ENCODE measurements at regions of chr4 and their contacts with region 1.

Region 1: DNA sequence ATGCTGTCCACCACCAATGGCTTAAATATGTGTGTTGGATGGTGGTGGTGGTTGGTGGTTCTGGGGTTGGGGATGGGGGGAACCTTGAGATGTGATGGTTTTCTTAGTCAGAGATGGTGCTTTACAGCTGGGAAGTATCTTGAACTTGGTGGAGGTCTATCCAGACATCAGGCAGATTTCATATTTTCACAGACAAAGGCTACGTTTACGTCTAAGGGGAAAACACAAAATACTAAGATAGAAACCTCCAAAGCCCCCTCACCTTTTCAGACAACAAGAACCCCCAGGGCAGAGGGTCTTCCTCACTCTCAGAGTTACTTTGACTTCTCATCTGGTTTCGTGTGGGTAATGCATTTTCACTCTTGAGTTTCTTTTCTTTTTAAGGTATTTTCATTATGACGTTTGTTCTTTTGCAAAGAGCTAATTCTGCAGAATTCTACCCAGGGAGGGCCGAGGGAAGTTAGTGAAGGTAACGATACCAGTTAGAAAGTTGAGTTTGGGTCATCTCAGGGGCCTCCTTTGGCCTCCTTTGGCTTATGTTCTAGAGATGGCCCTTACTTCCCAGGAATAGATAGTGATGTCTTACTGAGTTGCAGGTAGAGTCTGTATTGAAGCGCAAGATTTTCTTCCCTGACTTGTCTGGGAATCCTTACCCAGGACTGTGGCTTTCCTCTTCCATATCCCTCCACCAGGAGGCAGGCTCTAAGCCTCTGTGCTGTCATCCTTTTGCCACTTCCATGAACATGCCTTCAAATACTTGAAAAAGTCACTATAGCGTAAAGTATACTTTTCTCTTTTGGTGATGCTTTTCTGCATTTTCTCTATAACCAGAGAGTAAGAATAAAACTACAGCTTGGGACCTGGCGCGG is 31.9 kb downstream of the RHOH start:
- DNase-seq: peak in 1 of 2 experiments; percentile 61
- H3K4me3 ChIP-seq: no peak overlapping the region
- H3K27ac ChIP-seq: no peak overlapping the region
- H3K4me1 ChIP-seq: peaks cover 2 to 3% (median 2%) of the 10 kb centered on the region in 4 experiments; a peak in 3 of 7 replicates
- H3K27me3 ChIP-seq: no peaks in the 10 kb centered on the region
- CTCF ChIP-seq: peak; percentile 48 to 73 (median 73)
- EP300 ChIP-seq: no peak
- POLR2A ChIP-seq: no peak
- RAD21 ChIP-seq: peak; percentile 50 to 74

Region 2: GRCh38 chr4:39855909-39856512 is 372.7 kb before region 1 on chr4:
- CTCF ChIA-PET with region 1: no interaction called
- POLR2A ChIA-PET with region 1: no interaction called
- DNase-seq: no peak
- H3K4me3 ChIP-seq: no peak overlapping the region
- H3K27ac ChIP-seq: no peak overlapping the region
- H3K4me1 ChIP-seq: no peaks in the 10 kb centered on the region
- H3K27me3 ChIP-seq: no peaks in the 10 kb centered on the region
- CTCF ChIP-seq: no peak
- EP300 ChIP-seq: no peak
- POLR2A ChIP-seq: no peak
- RAD21 ChIP-seq: no peak

Region 3: GRCh38 chr4:40149960-40150385 is 78.8 kb before region 1 on chr4:
- CTCF ChIA-PET with region 1: no interaction called
- POLR2A ChIA-PET with region 1: no interaction called
- DNase-seq: peak in 1 of 2 experiments; percentile 69
- H3K4me3 ChIP-seq: no peak overlapping the region
- H3K27ac ChIP-seq: no peak overlapping the region
- H3K4me1 ChIP-seq: no peaks in the 10 kb centered on the region
- H3K27me3 ChIP-seq: no peaks in the 10 kb centered on the region
- CTCF ChIP-seq: peak; percentile 33 to 85 (median 75)
- EP300 ChIP-seq: no peak
- POLR2A ChIP-seq: no peak
- RAD21 ChIP-seq: peak; percentile 83 to 86

Region 4: GRCh38 chr4:40238700-40239548 is 10.2 kb after region 1 on chr4:
- CTCF ChIA-PET with region 1: interaction called, 12 read pairs
- POLR2A ChIA-PET with region 1: interaction called, 3 read pairs
- DNase-seq: no peak
- H3K4me3 ChIP-seq: no peak overlapping the region
- H3K27ac ChIP-seq: 0 out of 2 replicates have a peak overlapping the region, but pooled peaks have one; percentile 15
- H3K4me1 ChIP-seq: no peaks in the 10 kb centered on the region
- H3K27me3 ChIP-seq: no peaks in the 10 kb centered on the region
- CTCF ChIP-seq: no peak
- EP300 ChIP-seq: no peak
- POLR2A ChIP-seq: no peak
- RAD21 ChIP-seq: no peak

Region 5: GRCh38 chr4:40246011-40246900 is 17.5 kb after region 1 on chr4:
- CTCF ChIA-PET with region 1: interaction called, 12 read pairs
- POLR2A ChIA-PET with region 1: interaction called, 3 read pairs
- DNase-seq: peak in 1 of 2 experiments; percentile 55
- H3K4me3 ChIP-seq: no peak overlapping the region
- H3K27ac ChIP-seq: no peak overlapping the region
- H3K4me1 ChIP-seq: no peaks in the 10 kb centered on the region; a peak in 2 of 7 replicates
- H3K27me3 ChIP-seq: no peaks in the 10 kb centered on the region
- CTCF ChIP-seq: peak; percentile 44 to 57 (median 48)
- EP300 ChIP-seq: no peak
- POLR2A ChIP-seq: no peak
- RAD21 ChIP-seq: peak; percentile 49 to 65

Region 6: DNA sequence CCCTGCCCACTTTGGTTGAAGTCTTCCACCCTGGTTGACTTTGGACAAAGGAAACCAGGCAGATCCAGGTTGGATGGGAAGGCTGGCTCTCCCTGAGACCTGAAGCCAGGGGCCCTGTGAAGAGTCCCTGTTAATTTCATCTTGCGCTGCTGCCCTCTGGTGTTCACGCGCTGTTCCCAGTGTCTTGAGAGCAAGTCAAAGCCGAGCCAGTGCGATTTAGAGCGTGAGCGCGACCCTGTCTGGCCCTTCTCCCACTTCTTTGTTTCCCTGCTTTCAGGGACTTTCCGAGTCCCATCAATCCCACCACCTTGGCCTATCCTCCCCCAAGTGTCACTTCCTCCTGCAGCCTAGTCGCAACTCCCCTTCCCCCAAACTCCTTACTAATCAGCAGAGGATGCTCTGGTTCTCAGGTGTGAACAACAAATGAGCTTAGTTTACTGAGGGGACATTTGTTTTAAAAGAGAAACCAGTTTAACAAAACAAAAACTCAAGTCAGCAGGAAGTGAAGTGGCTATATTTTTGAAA is 80.6 kb after region 1 on chr4:
- CTCF ChIA-PET with region 1: interaction called, 20 read pairs
- POLR2A ChIA-PET with region 1: no interaction called
- DNase-seq: peak; percentile 92 to 95
- H3K4me3 ChIP-seq: peak overlapping the region in 1 of 4 experiments; percentile 16; a peak in 1 of 8 replicates
- H3K27ac ChIP-seq: peak overlapping the region; percentile 2; the same call in 1 of the 2 replicates
- H3K4me1 ChIP-seq: peaks cover 6 to 25% (median 16%) of the 10 kb centered on the region in 4 experiments; a peak in 6 of 7 replicates
- H3K27me3 ChIP-seq: peaks cover 0 to 1% (median 0%) of the 10 kb centered on the region in 4 experiments; a peak in 1 of 7 replicates
- CTCF ChIP-seq: peak; percentile 85 to 96 (median 87)
- EP300 ChIP-seq: peak in 1 of 2 experiments; percentile 81; a peak in 1 of 3 replicates
- POLR2A ChIP-seq: peak in 1 of 2 experiments; percentile 39; a peak in 1 of 3 replicates
- RAD21 ChIP-seq: peak; percentile 86 to 88

Region 7: DNA sequence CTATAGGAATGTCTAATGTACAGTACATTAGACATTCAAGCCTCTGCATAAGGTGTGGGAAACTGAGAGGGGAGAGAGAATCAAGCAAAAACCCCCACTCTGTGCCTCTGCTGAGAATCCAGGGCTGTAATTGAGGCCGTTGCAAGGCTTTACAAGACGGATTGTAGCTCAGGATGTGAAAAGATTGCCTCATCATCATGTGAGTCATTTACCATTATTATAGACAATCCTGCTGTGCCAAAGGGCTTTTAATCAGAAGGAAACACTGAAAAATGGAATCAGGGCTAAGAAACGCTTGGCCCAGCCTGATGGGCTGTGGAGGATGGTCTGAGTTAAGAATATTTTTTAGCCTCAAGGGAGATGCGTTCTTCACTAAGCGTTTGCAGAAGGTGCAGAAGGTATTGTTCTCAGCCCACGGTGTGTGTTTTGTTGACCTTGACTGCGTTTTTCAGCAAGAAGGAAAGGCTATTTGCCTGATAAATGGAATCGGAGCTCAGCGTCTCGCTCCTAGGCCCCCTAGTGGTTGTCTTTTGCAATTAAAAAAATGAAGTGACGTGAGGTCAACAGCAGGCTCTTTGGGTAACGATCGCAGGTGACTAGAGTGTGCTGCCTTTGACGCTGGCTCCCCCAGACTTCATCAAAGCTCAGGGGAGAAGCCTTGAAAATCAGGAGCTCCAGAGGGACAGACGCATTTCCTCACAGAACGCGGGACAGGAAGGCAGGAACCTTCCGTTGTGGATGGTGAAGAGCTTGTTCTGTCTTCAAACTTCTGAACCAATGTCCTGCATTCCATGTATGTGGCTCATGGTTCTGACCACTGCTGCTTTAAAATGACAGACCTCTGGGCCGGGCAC is 88.3 kb after region 1 on chr4:
- CTCF ChIA-PET with region 1: interaction called, 10 read pairs
- POLR2A ChIA-PET with region 1: no interaction called
- DNase-seq: peak; percentile 43 to 72
- H3K4me3 ChIP-seq: peak overlapping the region in 1 of 4 experiments; percentile 28; a peak in 1 of 8 replicates
- H3K27ac ChIP-seq: no peak overlapping the region
- H3K4me1 ChIP-seq: peaks cover 4 to 9% (median 8%) of the 10 kb centered on the region in 4 experiments; a peak in 6 of 7 replicates
- H3K27me3 ChIP-seq: peaks cover 0 to 1% (median 0%) of the 10 kb centered on the region in 4 experiments; a peak in 1 of 7 replicates
- CTCF ChIP-seq: peak in 2 of 3 experiments; percentile 77 to 85; a peak in 3 of 4 replicates
- EP300 ChIP-seq: no peak
- POLR2A ChIP-seq: no peak
- RAD21 ChIP-seq: peak; percentile 61 to 71

Region 8: DNA sequence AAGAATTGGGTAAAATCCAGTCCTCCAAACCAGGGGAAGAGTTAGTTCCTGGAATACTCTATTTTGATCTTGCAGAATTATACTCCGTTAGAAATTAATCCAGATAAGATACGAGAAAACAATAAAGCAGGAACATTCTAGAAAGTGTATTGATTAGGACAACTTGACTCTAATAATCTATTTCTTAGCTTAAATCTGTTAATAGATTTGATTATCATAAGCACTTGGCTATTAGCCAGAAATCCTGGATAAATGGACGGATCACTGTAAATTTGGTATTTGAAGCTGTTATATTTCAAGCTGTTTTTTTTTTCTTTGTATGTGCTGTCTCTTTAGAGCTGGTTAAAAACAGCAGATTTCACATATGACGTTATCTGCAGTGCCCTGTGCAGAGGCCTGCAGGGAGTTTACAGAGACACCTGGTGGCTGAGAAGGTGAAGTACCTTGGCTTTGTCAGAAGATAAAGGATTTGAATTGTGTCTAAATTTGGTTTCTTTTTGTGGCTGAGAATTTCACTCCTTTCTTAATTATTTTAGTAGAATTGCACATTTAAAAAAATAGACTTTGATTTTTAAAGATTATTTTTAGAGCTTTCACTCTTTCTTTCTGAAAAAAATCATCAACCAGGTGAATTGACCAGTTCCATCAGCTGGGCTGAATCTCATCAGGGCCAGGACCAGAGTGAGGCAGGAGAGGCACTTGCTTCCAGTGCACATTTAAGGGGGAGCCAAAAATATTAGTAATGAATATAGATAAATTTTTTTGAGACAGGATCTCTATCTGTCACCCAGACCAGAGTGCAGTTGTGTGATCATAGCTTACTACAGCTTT is 96.7 kb after region 1 on chr4:
- CTCF ChIA-PET with region 1: interaction called, 18 read pairs
- POLR2A ChIA-PET with region 1: no interaction called
- DNase-seq: no peak
- H3K4me3 ChIP-seq: no peak overlapping the region
- H3K27ac ChIP-seq: no peak overlapping the region
- H3K4me1 ChIP-seq: peaks cover 0 to 5% (median 0%) of the 10 kb centered on the region in 4 experiments; a peak in 1 of 7 replicates
- H3K27me3 ChIP-seq: no peaks in the 10 kb centered on the region
- CTCF ChIP-seq: peak; percentile 54 to 81 (median 70)
- EP300 ChIP-seq: no peak
- POLR2A ChIP-seq: no peak
- RAD21 ChIP-seq: peak; percentile 82 to 84